B cell (primary cell): ENCODE measurements at regions of chrX and their contacts with region 1.

Region 1: GRCh38 chrX:103686199-103687072 is at the start of gene MORF4L2:
- DNase-seq: no peak
- ATAC-seq: peak; percentile 80
- H3K4me3 ChIP-seq: peak within 1 kb of the TSS; percentile 79 to 95 (median 82)
- H3K4me3 Mint-ChIP-seq: peak within 1 kb of the TSS; percentile 67
- H3K27ac ChIP-seq: peak within 1 kb of the TSS; percentile 97
- H3K27ac Mint-ChIP-seq: peak within 1 kb of the TSS; percentile 50
- H3K4me1 ChIP-seq: peaks cover 3 to 4% of the 10 kb centered on the region in 2 donors
- H3K4me1 Mint-ChIP-seq: peaks cover 7% of the 10 kb centered on the region
- H3K27me3 ChIP-seq: no peaks in the 10 kb centered on the region
- H3K27me3 Mint-ChIP-seq: no peaks in the 10 kb centered on the region
- CTCF ChIP-seq: no peak
- total RNA-seq, gene MORF4L2: 81.8 and 103 TPM in 2 replicates

Region 2: DNA sequence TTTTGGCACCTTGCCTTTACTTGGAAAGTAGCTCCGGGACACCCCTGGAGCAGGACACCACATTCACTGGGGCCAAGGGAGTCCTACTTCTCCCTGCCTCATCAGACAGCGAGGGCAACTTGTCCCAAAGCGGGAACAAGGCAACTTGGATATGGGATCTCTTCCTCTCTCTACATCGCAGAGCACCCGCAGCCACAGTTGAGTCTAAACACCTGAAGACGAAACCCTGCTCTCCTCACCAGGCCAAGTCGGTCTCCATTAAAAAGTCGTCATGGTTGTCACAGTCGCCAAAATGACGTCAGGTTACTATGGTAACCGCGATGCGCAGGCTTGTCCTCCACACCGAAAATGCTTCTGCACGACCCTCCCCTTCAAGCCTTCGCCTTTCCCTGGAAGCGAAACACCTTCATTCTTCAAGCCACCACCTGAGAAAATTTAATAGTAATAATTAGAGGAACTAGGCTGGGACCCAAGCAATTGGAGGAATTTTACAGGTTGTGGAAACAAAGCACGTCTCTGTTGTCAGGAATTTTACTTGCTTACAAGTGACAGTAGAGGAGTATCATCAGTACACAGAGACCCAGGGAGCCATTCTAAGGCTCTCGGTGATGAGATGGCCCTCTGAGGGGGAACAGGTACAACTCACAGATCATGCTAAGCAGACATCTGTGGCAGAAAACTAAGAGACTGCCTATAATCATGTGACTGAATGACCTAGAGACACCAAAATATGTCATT is 131.6 kb before region 1 on chrX:
- CTCF ChIA-PET with region 1: no interaction called
- POLR2A ChIA-PET with region 1: no interaction called
- intact Hi-C with region 1: loop called (anchors 10 kb)
- DNase-seq: peak; percentile 81
- ATAC-seq: peak; percentile 62
- H3K4me3 ChIP-seq: peak overlapping the region; percentile 32 to 68 (median 55)
- H3K4me3 Mint-ChIP-seq: peak overlapping the region; percentile 91
- H3K27ac ChIP-seq: peak overlapping the region in 1 of 2 donors; percentile 55
- H3K27ac Mint-ChIP-seq: peak overlapping the region; percentile 86
- H3K4me1 ChIP-seq: peaks cover 5 to 10% of the 10 kb centered on the region in 2 donors
- H3K4me1 Mint-ChIP-seq: peaks cover 10% of the 10 kb centered on the region
- H3K27me3 ChIP-seq: no peaks in the 10 kb centered on the region
- H3K27me3 Mint-ChIP-seq: no peaks in the 10 kb centered on the region
- CTCF ChIP-seq: no peak

Region 3: GRCh38 chrX:103711533-103712369 is 25.3 kb after region 1 on chrX:
- CTCF ChIA-PET with region 1: interaction called, 11 read pairs
- POLR2A ChIA-PET with region 1: no interaction called
- intact Hi-C with region 1: no loop called
- DNase-seq: peak; percentile 62
- ATAC-seq: peak; percentile 31
- H3K4me3 ChIP-seq: no peak overlapping the region
- H3K4me3 Mint-ChIP-seq: no peak overlapping the region
- H3K27ac ChIP-seq: no peak overlapping the region
- H3K27ac Mint-ChIP-seq: no peak overlapping the region
- H3K4me1 ChIP-seq: no peaks in the 10 kb centered on the region
- H3K4me1 Mint-ChIP-seq: no peaks in the 10 kb centered on the region
- H3K27me3 ChIP-seq: no peaks in the 10 kb centered on the region
- H3K27me3 Mint-ChIP-seq: no peaks in the 10 kb centered on the region
- CTCF ChIP-seq: peak; percentile 64

Region 4: DNA sequence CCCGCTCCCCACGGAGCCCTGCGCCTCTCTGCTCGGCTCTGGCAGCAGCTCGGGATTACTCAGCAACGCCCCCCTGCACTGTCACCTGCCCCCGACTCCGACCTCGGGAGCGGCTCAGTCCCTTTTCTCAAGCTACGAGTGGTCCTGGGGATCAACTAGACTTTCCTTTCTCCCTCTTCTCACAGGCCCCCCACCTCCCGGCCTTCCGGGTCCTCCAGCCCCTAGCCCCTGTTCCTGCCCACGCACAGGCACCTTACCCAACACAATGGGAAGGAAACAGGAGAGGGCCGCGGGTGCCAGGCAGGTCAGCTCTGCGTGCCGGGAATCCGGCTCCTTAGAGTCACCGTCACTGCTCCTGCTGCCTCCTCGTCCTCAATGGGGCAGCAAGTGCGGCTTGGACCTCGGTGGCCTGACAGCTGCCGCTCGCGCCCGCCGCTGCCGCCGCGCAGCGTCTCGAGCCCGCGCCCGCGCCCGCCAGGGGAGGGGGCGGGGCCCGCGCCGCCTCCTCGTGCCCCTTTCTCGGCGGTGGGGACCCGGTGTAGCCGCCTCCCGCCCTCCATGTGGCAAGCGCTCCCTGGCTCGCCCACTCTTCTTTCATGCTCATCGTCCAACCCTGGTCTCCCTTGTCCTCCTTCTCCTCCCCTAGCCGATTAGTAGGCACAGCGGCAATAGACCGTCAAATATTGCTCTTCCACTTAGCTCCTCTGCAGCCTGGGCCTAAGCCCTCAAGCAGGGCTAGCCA is 145.5 kb after region 1 on chrX and contains the start of gene RAB9B:
- CTCF ChIA-PET with region 1: interaction called, 3 read pairs
- POLR2A ChIA-PET with region 1: no interaction called
- intact Hi-C with region 1: loop called (anchors 5 kb)
- DNase-seq: no peak
- ATAC-seq: peak; percentile 93
- H3K4me3 ChIP-seq: peak within 1 kb of the TSS in 4 of 5 experiments; percentile 64 to 72 (median 68)
- H3K4me3 Mint-ChIP-seq: peak within 1 kb of the TSS; percentile 94
- H3K27ac ChIP-seq: no peak within 1 kb of the TSS
- H3K27ac Mint-ChIP-seq: peak within 1 kb of the TSS; percentile 46
- H3K4me1 ChIP-seq: peaks cover 4 to 5% of the 10 kb centered on the region in 2 donors
- H3K4me1 Mint-ChIP-seq: peaks cover 5% of the 10 kb centered on the region
- H3K27me3 ChIP-seq: no peaks in the 10 kb centered on the region
- H3K27me3 Mint-ChIP-seq: peaks cover 3% of the 10 kb centered on the region
- CTCF ChIP-seq: no peak
- total RNA-seq, gene RAB9B: 0.44 and 0.75 TPM in 2 replicates

Region 5: GRCh38 chrX:103845165-103845653 is 158.8 kb after region 1 on chrX:
- CTCF ChIA-PET with region 1: no interaction called
- POLR2A ChIA-PET with region 1: no interaction called
- intact Hi-C with region 1: no loop called
- DNase-seq: peak; percentile 50
- ATAC-seq: peak; percentile 39
- H3K4me3 ChIP-seq: no peak overlapping the region
- H3K4me3 Mint-ChIP-seq: no peak overlapping the region
- H3K27ac ChIP-seq: no peak overlapping the region
- H3K27ac Mint-ChIP-seq: no peak overlapping the region
- H3K4me1 ChIP-seq: no peaks in the 10 kb centered on the region
- H3K4me1 Mint-ChIP-seq: no peaks in the 10 kb centered on the region
- H3K27me3 ChIP-seq: no peaks in the 10 kb centered on the region
- H3K27me3 Mint-ChIP-seq: peaks cover 2% of the 10 kb centered on the region
- CTCF ChIP-seq: peak; percentile 58

Region 6: DNA sequence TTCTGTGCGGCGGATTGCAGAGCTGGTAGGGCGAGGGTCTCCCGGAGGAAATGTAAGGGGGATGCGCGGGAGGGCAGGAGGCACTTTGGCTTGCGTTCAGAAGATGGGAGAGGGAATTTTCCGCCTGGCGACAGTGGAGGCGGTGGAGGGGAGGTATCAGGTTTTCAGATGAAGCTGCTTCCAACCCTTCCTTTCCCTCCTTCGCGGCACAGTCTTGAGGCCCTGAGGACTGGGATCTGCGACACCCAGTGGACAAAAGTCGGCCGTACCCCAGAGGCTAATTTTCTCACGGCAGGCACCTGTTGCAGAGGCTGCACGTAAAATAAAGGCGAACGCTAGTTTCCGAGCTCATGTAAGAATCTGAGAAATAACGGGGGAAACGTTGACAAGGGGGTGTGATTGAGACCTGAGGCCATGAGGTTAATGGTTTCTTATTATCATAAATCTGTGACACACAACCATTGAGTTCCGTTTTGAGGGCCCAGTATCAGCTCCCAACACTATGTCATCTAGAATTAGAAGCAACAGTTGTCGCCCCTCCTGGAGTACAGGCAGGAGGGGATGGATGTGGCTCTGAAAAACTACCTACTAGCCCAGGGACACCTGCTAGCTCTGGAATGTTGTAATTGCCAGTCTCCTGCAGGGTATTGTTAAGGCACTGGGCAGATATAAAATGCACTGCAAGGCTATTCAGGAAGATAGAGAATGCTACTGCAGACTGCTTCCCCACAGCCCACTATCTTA is 427.0 kb after region 1 on chrX:
- CTCF ChIA-PET with region 1: no interaction called
- POLR2A ChIA-PET with region 1: no interaction called
- intact Hi-C with region 1: loop called (anchors 5 kb)
- DNase-seq: peak; percentile 65
- ATAC-seq: peak; percentile 63
- H3K4me3 ChIP-seq: peak overlapping the region; percentile 41 to 73 (median 65)
- H3K4me3 Mint-ChIP-seq: peak overlapping the region; percentile 92
- H3K27ac ChIP-seq: peak overlapping the region; percentile 29 to 63
- H3K27ac Mint-ChIP-seq: peak overlapping the region; percentile 91
- H3K4me1 ChIP-seq: peaks cover 29 to 39% of the 10 kb centered on the region in 2 donors
- H3K4me1 Mint-ChIP-seq: peaks cover 41% of the 10 kb centered on the region
- H3K27me3 ChIP-seq: no peaks in the 10 kb centered on the region
- H3K27me3 Mint-ChIP-seq: no peaks in the 10 kb centered on the region
- CTCF ChIP-seq: peak; percentile 53